ENCODE measurements at regions of chr16 and their contacts with region 1.

Region 1: DNA sequence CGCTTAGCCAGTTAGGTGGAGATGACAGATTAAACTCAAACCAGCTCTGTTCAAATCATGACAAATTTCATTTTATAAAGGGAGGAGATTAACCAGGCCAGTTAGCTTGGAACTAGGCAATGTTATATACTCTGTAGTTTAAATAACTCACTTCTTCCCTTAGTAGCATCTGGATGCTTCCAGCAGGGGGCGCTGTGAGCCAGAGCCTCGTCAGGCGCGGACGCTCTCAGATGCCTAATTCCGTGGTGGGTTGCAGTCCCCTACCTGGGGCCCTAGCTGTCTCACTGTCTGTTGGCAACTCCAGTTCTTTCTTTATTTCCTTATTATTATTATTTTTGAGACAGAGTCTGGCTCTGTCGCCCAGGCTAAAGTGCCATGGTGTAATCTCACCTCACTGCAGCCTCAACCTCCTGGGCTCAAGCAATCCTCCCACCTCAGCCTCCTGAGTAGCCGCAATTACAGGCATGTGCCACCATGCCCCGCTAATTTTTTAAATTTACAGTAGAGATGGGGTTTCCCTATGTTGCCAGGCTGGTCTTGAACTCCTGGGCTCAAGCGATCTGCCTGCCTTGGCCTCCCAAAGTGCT is 17.3 kb upstream of the WFDC1 start:
- DNase-seq: peak; percentile 77
- H3K4me3 Mint-ChIP-seq: no peak overlapping the region
- H3K27ac Mint-ChIP-seq: no peak overlapping the region
- H3K4me1 Mint-ChIP-seq: no peaks in the 10 kb centered on the region
- H3K27me3 Mint-ChIP-seq: peaks cover 8% of the 10 kb centered on the region

Region 2: GRCh38 chr16:84223456-84223855 is 53.9 kb before region 1 on chr16:
- CTCF ChIA-PET with region 1: no interaction called
- POLR2A ChIA-PET with region 1: no interaction called
- intact Hi-C with region 1: no loop called
- DNase-seq: no peak
- H3K4me3 Mint-ChIP-seq: no peak overlapping the region
- H3K27ac Mint-ChIP-seq: no peak overlapping the region
- H3K4me1 Mint-ChIP-seq: no peaks in the 10 kb centered on the region
- H3K27me3 Mint-ChIP-seq: peaks cover 20% of the 10 kb centered on the region

Region 3: GRCh38 chr16:84266451-84266850 is 10.9 kb before region 1 on chr16:
- CTCF ChIA-PET with region 1: interaction called, 36 read pairs
- POLR2A ChIA-PET with region 1: no interaction called
- intact Hi-C with region 1: no loop called
- DNase-seq: peak; percentile 53
- H3K4me3 Mint-ChIP-seq: no peak overlapping the region
- H3K27ac Mint-ChIP-seq: no peak overlapping the region
- H3K4me1 Mint-ChIP-seq: no peaks in the 10 kb centered on the region
- H3K27me3 Mint-ChIP-seq: peaks cover 7% of the 10 kb centered on the region

Region 4: DNA sequence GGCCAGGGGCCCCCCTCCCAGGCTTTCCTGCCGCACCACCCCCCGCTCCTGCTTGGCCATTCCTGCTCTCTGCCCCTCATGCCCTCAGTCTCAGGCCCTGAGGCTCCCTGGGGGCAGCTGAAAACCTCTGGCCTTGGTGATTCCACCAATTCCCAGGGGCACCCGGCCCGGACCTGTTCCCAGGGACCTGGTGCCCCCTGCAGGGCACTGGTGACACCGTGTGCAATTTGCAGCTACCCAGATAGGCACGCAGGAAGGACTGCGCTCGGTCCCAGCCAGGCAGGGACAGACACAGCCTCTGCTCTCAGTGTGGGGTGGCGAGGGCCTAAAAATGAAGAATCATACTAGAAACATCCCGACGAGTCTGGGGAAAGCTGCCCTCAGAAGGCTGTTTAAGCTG is 30.8 kb after region 1 on chr16:
- CTCF ChIA-PET with region 1: interaction called, 19 read pairs
- POLR2A ChIA-PET with region 1: no interaction called
- intact Hi-C with region 1: no loop called
- DNase-seq: peak; percentile 24
- H3K4me3 Mint-ChIP-seq: no peak overlapping the region
- H3K27ac Mint-ChIP-seq: no peak overlapping the region
- H3K4me1 Mint-ChIP-seq: no peaks in the 10 kb centered on the region
- H3K27me3 Mint-ChIP-seq: peaks cover 20% of the 10 kb centered on the region

Region 5: DNA sequence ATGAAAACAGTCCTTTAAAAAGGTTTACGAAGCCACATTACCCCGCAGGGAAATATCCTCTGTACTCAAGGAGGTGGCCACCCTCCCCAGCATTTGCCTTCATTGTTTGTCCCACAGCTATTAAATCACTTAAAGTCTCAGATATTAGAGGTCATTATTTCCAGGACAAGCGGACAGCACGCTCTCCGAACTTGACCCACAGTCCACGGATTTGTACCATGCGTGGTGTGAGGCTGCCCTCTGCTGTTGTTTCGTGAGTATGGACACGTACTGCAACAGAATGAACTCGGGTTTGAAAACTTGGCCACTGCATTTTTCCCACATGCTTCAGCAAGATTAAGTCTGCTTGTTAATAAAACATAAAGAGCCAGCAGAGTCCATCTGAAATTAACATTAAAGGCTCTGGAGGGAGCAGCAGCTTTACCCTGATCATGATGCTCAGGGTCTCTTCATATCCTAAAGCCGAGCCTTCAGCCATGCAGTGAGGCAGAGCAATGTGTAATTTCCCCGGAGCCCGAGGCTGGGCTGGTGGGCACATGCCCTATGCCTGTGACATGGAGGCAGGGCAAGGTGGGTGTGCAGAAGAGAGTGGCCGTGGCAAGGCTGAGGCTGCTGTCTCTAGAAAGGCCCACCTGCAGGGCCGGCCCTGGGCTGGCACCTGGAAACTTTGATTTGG is 207.4 kb after region 1 on chr16:
- CTCF ChIA-PET with region 1: interaction called, 28 read pairs
- POLR2A ChIA-PET with region 1: no interaction called
- intact Hi-C with region 1: no loop called
- DNase-seq: peak; percentile 23
- H3K4me3 Mint-ChIP-seq: no peak overlapping the region
- H3K27ac Mint-ChIP-seq: no peak overlapping the region
- H3K4me1 Mint-ChIP-seq: no peaks in the 10 kb centered on the region
- H3K27me3 Mint-ChIP-seq: no peaks in the 10 kb centered on the region

Region 6: GRCh38 chr16:84504420-84505248 is 227.3 kb after region 1 on chr16 and contains the start of gene MEAK7:
- CTCF ChIA-PET with region 1: interaction called, 55 read pairs
- POLR2A ChIA-PET with region 1: no interaction called
- intact Hi-C with region 1: loop called (anchors 1 kb)
- DNase-seq: peak; percentile 99
- H3K4me3 Mint-ChIP-seq: peak within 1 kb of the TSS; percentile 86
- H3K27ac Mint-ChIP-seq: peak within 1 kb of the TSS; percentile 87
- H3K4me1 Mint-ChIP-seq: peaks cover 51% of the 10 kb centered on the region
- H3K27me3 Mint-ChIP-seq: no peaks in the 10 kb centered on the region
- total RNA-seq, gene MEAK7: 12.9 to 13.6 TPM

Region 7: GRCh38 chr16:84629580-84629979 is 352.2 kb after region 1 on chr16:
- CTCF ChIA-PET with region 1: interaction called, 3 read pairs
- POLR2A ChIA-PET with region 1: no interaction called
- intact Hi-C with region 1: loop called (anchors 10 kb)
- DNase-seq: no peak
- H3K4me3 Mint-ChIP-seq: no peak overlapping the region
- H3K27ac Mint-ChIP-seq: no peak overlapping the region
- H3K4me1 Mint-ChIP-seq: peaks cover 20% of the 10 kb centered on the region
- H3K27me3 Mint-ChIP-seq: no peaks in the 10 kb centered on the region